Posterior vena cava (tissue), 2 donors: ENCODE measurements at regions of chr1 and their contacts with region 1.

Region 1: GRCh38 chr1:185644531-185644930 is 89.7 kb upstream of the HMCN1 start:
- DNase-seq: no peak

Region 2: GRCh38 chr1:185033686-185034085 is 610.8 kb before region 1 on chr1:
- intact Hi-C with region 1: loop called in 1 of 2 experiments (anchors 5 kb)
- DNase-seq: no peak